GM23248 (cell line): ENCODE measurements at regions of chr3 and their contacts with region 1.

Region 1: GRCh38 chr3:197256836-197257444 is 41.5 kb downstream of the DLG1 start:
- DNase-seq: peak; percentile 62
- H3K4me3 ChIP-seq: no peak overlapping the region
- H3K27ac ChIP-seq: no peak overlapping the region
- H3K4me1 ChIP-seq: no peaks in the 10 kb centered on the region; the same call in 1 of the 2 replicates
- H3K27me3 ChIP-seq: no peaks in the 10 kb centered on the region

Region 2: GRCh38 chr3:196942226-196942914 is 314.6 kb before region 1 on chr3 and contains the start of gene NCBP2:
- in situ Hi-C with region 1: no loop called
- DNase-seq: peak; percentile 99
- H3K4me3 ChIP-seq: peak within 1 kb of the TSS; percentile 85
- H3K27ac ChIP-seq: peak within 1 kb of the TSS; percentile 95
- H3K4me1 ChIP-seq: peaks cover 12% of the 10 kb centered on the region
- H3K27me3 ChIP-seq: no peaks in the 10 kb centered on the region
- total RNA-seq, gene NCBP2: 75.3 and 81.9 TPM in 2 replicates

Region 3: GRCh38 chr3:197501879-197502620 is 245.1 kb after region 1 on chr3:
- in situ Hi-C with region 1: loop called (anchors 5 kb)
- DNase-seq: peak; percentile 88
- H3K4me3 ChIP-seq: no peak overlapping the region
- H3K27ac ChIP-seq: no peak overlapping the region
- H3K4me1 ChIP-seq: 0 out of 2 replicates have a peak, but pooled peaks cover 6% of the 10 kb centered on the region
- H3K27me3 ChIP-seq: no peaks in the 10 kb centered on the region